ENCODE measurements at regions of chr4 and their contacts with region 1.

Region 1: GRCh38 chr4:188903995-188904394 is 764.8 kb downstream of the TRIML1 start:
- DNase-seq: no peak
- H3K4me3 Mint-ChIP-seq: no peak overlapping the region
- H3K27ac Mint-ChIP-seq: peak overlapping the region; percentile 25
- H3K4me1 Mint-ChIP-seq: no peaks in the 10 kb centered on the region
- H3K27me3 Mint-ChIP-seq: no peaks in the 10 kb centered on the region
- CTCF ChIP-seq: no peak

Region 2: DNA sequence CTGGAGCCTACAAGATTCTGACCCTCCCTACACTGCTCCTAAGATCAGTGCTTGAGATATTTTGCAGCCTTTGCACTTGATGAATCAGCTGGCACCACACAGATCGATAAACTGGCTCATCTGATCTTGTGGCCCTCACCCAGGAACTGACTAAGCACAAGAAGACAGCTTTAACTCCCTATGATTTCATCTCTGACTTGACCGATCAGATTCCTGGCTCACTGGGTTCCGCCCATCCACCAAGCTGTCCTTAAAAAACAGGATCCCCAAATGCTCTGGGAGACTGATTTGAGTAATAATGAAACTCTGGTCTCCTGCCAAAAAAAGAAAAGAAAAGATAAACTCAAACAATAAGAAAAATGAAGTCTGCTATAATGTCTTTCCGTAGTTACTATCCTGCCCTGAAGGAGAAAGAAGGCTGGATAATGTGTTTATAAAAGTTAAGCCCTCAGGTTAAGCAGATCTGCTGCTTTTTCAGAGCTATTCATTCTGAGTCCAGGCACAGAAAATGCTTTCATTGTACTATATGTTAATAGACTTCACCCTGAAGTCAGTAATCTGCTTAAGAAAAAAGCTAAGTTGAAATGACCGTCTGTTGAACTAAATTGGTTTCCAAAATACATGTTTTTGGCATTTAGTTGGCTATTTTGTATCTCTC is 30.5 kb after region 1 on chr4:
- CTCF ChIA-PET with region 1: no interaction called
- POLR2A ChIA-PET with region 1: no interaction called
- intact Hi-C with region 1: loop called (anchors 1 kb)
- DNase-seq: no peak
- H3K4me3 Mint-ChIP-seq: no peak overlapping the region
- H3K27ac Mint-ChIP-seq: peak overlapping the region; percentile 47
- H3K4me1 Mint-ChIP-seq: peaks cover 11% of the 10 kb centered on the region
- H3K27me3 Mint-ChIP-seq: no peaks in the 10 kb centered on the region
- CTCF ChIP-seq: no peak

Region 3: DNA sequence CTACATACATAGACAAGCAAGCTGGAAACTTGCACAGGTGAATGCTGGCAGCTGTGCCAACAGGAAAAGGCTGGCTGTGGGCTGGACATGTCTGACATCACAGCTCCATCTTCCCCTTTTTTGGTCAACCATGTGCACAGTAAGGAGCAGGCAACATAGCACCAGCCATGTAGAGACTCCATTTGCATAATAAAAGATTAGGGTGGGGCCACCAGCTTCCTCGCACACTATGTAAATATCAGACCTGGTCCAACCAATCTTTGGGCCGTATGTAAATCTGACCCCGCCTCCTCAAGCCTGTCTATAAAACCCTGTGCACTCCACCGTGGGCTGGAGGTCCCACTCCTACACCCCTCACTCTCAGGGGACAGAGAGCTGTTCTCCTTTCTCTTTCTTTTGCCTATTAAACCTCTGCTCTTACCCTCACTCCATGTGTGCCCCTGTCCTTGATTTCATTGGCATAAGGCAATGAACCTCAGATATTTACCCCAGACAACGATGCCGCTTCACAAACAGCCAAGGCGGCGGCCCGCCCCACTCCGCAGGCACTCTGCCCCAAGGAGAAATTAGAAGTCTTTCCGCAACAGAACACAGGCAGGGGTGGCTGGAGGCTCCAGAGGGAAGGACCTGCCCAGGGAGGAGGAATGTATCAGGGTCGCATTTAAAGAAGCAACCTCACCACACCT is 97.4 kb after region 1 on chr4:
- CTCF ChIA-PET with region 1: no interaction called
- POLR2A ChIA-PET with region 1: no interaction called
- intact Hi-C with region 1: no loop called
- DNase-seq: no peak
- H3K4me3 Mint-ChIP-seq: no peak overlapping the region
- H3K27ac Mint-ChIP-seq: no peak overlapping the region
- H3K4me1 Mint-ChIP-seq: no peaks in the 10 kb centered on the region
- H3K27me3 Mint-ChIP-seq: no peaks in the 10 kb centered on the region
- CTCF ChIP-seq: no peak

Measured in MCF 10A (cell line).